ENCODE measurements at regions of chr11 and their contacts with region 1.

Region 1: DNA sequence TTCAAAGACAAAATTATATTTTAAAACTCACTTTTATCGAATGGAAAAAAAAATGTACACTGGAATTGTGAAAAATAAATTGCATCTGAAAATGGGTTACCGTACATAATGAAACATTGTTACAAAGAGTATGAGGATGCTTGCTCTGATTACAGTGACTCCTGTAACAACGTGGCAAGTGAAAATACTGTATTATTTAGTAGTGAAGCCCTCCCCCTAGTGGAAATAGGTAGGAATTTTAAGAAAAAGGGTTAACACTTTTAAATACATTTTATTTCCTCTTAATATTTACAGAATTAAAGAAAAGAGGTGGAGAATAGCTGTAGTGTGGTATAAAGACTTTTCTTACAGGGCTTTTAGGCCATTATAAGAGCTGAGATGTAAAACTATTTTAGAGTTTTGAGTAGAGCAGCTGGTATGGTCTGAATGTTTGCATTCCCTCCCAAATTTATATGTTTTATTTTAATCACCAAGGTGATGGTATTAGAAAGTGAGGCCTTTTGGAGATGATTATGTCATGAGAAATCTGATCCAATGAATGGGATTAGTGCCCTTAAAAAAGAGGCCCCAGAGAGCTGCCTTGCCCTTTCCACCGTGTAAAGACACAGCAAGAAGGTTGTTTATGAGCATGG is 25.2 kb downstream of the FAM76B start:
- DNase-seq: no peak
- ATAC-seq: no peak
- H3K4me3 ChIP-seq: no peak overlapping the region
- H3K27ac ChIP-seq: no peak overlapping the region
- H3K4me1 ChIP-seq: no peaks in the 10 kb centered on the region
- H3K27me3 ChIP-seq: no peaks in the 10 kb centered on the region

Region 2: DNA sequence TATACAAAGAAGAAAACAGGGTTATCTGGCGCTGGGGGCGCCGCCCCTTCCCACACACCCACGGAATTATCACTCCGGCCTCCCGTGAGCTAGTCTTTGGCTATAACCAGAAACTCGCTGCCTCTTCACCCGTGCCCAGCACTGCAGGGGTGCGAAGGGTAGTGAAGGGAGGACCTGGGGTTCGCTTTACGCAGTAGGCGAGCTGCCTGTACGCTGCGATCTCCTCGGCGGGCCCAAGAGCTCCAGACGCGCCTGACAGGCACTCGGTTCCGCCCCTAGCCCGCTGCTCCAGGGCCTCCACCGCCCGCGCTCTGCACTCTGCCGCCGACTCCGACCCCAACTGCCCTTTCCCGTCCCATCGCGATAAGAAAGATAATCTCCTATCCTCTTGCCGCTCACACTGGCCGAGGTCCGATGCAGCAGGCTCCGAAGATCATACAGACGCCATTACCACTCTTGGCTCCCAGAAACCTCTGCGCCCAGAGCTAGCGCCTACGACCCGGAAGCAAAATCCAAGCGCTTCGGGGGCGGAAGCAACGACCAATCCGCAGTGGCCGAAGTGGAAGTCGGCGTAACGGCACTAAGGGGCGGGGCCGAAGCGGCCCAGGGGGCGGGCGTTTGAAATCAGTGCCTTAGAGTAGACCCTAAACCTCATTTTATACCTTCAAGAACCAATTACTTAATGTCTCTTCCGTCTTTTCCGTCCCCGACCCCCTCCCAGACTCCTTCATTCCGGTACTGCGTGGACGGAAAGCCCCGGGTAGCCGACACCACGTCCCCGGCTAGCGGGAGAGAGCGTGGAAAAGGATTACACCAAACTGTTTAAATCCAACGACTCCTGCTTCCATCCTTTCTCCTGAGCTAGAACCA is 791.0 kb before region 1 on chr11 and contains the starts of genes CWC15 and KDM4D:
- intact Hi-C with region 1: loop called in 1 of 2 experiments (anchors 10 kb)
- DNase-seq: peak; percentile 97 to 98
- ATAC-seq: peak; percentile 99
- H3K4me3 ChIP-seq: peak within 1 kb of the TSS; percentile 71 to 96
- H3K27ac ChIP-seq: peak within 1 kb of the TSS in 1 of 2 donors; percentile 70
- H3K4me1 ChIP-seq: no peaks in the 10 kb centered on the region
- H3K27me3 ChIP-seq: no peaks in the 10 kb centered on the region
- total RNA-seq, gene CWC15: 49.7 to 54.7 TPM
- total RNA-seq, gene KDM4D: 0.45 to 0.75 TPM

Region 3: DNA sequence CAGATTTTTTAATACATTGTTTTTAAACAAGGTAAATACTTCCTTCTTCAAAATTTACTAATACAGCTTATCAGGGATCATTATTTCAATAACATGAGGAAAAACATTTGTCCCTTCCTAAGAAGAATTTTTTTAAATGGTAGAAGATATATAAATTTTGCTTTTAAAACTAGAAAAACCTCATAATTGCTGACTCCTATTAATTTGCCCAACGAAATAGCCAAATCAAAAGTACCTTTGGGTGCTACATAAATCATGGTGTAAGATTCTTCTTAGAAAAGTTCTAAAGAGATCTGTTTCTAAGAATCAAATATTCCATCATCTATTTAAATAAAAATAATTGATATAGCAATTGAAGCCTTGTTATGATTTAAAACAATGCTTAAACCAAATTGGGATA is 80.8 kb after region 1 on chr11:
- intact Hi-C with region 1: no loop called
- DNase-seq: no peak
- ATAC-seq: no peak
- H3K4me3 ChIP-seq: no peak overlapping the region
- H3K27ac ChIP-seq: no peak overlapping the region
- H3K4me1 ChIP-seq: no peaks in the 10 kb centered on the region
- H3K27me3 ChIP-seq: no peaks in the 10 kb centered on the region